ENCODE measurements at regions of chr14 and their contacts with region 1.

Region 1: DNA sequence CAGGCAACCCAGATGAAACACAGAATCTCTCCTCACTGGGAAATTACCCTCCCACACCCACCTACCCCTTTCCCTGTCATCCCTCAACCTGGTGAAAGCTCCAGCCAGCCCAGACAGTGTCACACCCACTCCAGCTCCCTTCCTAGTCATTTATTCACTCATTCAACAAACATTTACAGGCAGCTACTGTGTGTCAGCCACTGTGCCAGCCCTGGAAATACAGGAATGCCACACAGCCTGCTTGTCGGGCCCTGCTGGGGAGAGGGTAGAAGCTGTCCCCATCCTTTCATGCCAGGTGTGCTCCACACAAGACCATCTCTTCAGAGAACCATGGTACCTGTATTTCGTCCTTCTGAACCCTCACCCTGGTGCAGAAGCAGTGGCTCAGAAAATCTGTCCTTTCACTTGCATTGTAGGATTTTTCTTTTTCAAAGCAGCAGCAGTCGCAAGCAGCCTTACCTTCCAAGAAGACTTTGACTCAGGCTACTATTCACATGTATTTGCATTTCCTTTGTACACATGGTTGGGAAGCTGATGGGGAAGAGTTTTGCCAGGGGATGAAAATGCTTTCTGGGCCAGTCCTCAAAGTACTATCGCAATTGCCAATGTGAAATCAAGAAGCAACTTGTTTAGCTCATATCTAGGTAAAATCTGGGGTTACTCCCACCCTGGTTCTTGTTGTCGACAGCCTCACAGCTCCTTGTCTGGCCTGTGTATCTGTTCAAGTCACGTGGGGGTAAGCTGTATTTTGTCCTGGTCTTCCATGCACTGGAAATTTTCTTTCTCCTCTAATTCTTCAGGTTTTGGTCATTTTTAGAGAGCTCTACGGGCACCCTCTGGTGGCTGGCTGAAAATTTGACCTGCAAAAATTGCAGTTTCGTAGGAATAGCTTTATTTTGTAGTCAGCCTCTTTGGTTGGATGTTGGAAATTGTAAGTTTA is 147.4 kb upstream of the EGLN3 start:
- DNase-seq: no peak
- ATAC-seq: peak; percentile 51 to 61
- H3K4me3 ChIP-seq: no peak overlapping the region
- H3K27ac ChIP-seq: no peak overlapping the region
- H3K4me1 ChIP-seq: no peaks in the 10 kb centered on the region
- H3K27me3 ChIP-seq: no peaks in the 10 kb centered on the region
- CTCF ChIP-seq: peak; percentile 34 to 57 (median 56)
- POLR2A ChIP-seq: no peak

Region 2: DNA sequence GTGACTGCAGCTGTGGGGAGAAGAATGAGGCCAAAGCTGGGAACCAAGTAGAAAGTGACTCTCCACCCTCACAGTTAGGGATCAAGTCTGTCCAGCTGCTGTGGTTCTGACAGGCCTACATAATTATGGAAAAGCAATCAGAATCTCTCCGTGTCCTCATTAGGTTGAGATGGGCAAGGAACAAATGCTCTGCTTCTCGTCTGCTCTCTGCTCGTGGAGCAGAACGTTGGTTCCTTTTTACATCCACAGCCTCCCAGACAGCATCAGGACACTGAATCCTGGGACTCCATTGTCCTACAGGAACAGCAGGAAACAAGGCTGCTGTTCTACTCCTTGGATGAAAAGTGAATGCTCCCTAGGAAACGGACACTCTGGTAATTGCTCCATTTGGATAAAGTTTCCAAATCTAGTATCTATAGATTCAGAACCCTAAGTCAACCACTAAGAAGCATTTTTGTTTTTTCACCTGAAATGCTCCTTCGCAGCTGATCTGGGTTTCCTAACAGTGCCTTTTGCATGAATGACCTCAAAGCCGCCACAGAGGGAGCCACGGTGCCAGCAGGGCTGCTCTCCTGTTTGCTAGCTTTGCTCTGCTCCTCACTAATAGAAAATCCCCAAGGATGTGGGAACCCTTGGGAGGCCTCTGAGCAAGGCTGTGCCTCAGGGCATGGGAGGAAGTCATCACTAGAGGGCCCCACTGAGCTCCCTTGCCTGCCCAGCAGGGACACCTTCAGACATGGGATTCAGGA is 249.4 kb before region 1 on chr14:
- in situ Hi-C with region 1: loop called in 2 of 4 experiments (anchors 5 to 10 kb)
- intact Hi-C with region 1: loop called (anchors 1 kb)
- DNase-seq: peak in 1 of 2 donors; percentile 48
- ATAC-seq: peak; percentile 52 to 89
- H3K4me3 ChIP-seq: no peak overlapping the region
- H3K27ac ChIP-seq: no peak overlapping the region
- H3K4me1 ChIP-seq: no peaks in the 10 kb centered on the region
- H3K27me3 ChIP-seq: no peaks in the 10 kb centered on the region
- CTCF ChIP-seq: peak; percentile 45 to 69 (median 60)
- POLR2A ChIP-seq: no peak

Region 3: DNA sequence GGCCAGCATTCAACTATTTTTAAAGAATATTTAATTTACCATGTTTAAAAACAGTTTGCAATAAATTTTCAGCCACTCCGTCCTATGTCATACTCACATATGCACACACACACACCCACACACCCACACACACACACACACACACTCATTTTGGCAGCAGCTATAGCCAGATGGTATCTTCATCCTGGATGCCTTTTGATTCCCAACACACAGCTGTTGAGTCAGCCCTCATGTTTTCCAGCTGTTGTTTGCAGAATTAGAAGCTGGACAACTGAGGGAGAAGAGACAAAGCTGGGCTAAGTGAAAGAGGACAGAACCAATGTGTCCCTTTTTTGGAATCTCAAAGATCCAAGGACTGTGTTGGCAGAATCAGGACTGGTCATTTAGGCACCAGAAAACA is 67.5 kb before region 1 on chr14:
- in situ Hi-C with region 1: no loop called
- intact Hi-C with region 1: no loop called
- DNase-seq: peak; percentile 22 to 50
- ATAC-seq: peak; percentile 66 to 76
- H3K4me3 ChIP-seq: no peak overlapping the region
- H3K27ac ChIP-seq: peak overlapping the region; percentile 56 to 72 (median 66)
- H3K4me1 ChIP-seq: peaks cover 4 to 9% of the 10 kb centered on the region in 2 donors
- H3K27me3 ChIP-seq: no peaks in the 10 kb centered on the region
- CTCF ChIP-seq: no peak
- POLR2A ChIP-seq: no peak

Region 4: GRCh38 chr14:34211732-34212131 is 113.4 kb after region 1 on chr14:
- in situ Hi-C with region 1: no loop called
- intact Hi-C with region 1: no loop called
- DNase-seq: no peak
- ATAC-seq: no peak
- H3K4me3 ChIP-seq: no peak overlapping the region
- H3K27ac ChIP-seq: no peak overlapping the region
- H3K4me1 ChIP-seq: no peaks in the 10 kb centered on the region
- H3K27me3 ChIP-seq: no peaks in the 10 kb centered on the region
- CTCF ChIP-seq: no peak
- POLR2A ChIP-seq: no peak